Activated T-helper 2 cell treated with anti-CD3 and anti-CD28 coated beads, Interferon-gamma antibody, Interleukin-2, Interleukin-4, amounts not matched to agents 10 μg/mL and 5 μg/mL and 100 μg/mL, durations not matched to agents 14 hours and 24 hours and 36 hours (primary cell): ENCODE measurements at regions of chr12 and their contacts with region 1.

Region 1: DNA sequence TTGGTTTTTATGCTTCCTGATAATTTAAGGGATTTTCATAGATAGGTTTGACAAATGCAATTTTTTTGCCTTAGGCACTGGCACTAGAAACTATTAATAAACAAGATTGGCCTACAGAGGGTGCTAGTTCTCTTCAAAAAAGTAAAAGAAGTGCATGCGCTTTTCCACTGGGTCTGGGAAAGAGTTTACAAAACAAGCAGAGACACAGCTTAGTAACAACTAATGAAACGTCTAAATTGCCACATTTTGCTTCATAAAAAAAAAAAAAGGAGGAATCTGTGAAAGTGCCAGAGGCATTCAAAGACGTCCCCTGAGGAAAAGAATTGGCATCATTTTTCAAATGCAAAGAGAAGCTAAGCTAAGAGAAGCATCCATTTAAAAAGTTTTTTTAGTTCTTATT is 58.3 kb upstream of the EEA1 start:
- DNase-seq: no peak
- H3K4me3 Mint-ChIP-seq: no peak overlapping the region
- H3K27ac Mint-ChIP-seq: peak overlapping the region; percentile 60
- H3K4me1 Mint-ChIP-seq: peaks cover 38% of the 10 kb centered on the region
- H3K27me3 Mint-ChIP-seq: no peaks in the 10 kb centered on the region

Region 2: DNA sequence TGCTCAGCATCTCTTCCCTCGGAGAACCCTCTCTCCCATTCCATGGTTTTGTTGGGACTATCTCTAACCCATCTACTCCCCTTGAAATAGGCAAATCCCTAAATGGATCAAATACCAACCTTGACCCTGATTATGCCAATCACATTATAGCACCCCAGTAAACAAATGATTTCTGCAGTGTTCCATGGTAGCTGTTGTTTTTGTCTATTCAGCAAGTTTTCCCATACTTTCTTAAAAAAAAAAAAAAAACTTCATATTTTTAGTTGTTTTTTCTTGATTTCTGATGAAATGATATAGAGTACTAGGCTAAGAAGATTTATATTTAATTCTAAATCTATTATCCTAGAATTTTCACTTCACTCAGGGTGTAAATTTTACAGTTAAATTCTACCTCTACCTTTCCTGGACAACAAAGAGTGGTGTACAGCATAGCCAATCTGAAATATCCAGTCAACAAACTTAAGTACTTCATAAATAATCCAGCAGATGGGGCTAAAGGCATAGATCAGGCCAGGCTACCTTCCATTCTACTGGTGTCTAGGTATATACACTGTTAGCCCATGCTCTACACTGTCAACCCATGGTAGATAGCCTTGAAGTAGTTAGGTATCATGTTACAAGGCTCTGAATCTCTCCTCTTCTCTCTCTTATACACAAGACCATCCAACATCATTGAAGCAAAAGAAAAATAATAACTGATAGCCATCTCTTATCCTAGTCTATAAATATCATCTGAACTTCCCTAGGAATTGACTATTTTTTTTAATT is 202.4 kb before region 1 on chr12:
- intact Hi-C with region 1: loop called (anchors 1 kb)
- DNase-seq: no peak
- H3K4me3 Mint-ChIP-seq: no peak overlapping the region
- H3K27ac Mint-ChIP-seq: no peak overlapping the region
- H3K4me1 Mint-ChIP-seq: peaks cover 1% of the 10 kb centered on the region
- H3K27me3 Mint-ChIP-seq: no peaks in the 10 kb centered on the region

Region 3: GRCh38 chr12:92928962-92929915 is 58.1 kb before region 1 on chr12 and contains the start of gene EEA1:
- intact Hi-C with region 1: loop called (anchors 1 kb)
- DNase-seq: peak; percentile 93
- H3K4me3 Mint-ChIP-seq: peak within 1 kb of the TSS; percentile 88
- H3K27ac Mint-ChIP-seq: peak within 1 kb of the TSS; percentile 95
- H3K4me1 Mint-ChIP-seq: peaks cover 27% of the 10 kb centered on the region
- H3K27me3 Mint-ChIP-seq: peaks cover 2% of the 10 kb centered on the region
- total RNA-seq, gene EEA1: 30.5 and 31.9 TPM in 2 replicates

Region 4: DNA sequence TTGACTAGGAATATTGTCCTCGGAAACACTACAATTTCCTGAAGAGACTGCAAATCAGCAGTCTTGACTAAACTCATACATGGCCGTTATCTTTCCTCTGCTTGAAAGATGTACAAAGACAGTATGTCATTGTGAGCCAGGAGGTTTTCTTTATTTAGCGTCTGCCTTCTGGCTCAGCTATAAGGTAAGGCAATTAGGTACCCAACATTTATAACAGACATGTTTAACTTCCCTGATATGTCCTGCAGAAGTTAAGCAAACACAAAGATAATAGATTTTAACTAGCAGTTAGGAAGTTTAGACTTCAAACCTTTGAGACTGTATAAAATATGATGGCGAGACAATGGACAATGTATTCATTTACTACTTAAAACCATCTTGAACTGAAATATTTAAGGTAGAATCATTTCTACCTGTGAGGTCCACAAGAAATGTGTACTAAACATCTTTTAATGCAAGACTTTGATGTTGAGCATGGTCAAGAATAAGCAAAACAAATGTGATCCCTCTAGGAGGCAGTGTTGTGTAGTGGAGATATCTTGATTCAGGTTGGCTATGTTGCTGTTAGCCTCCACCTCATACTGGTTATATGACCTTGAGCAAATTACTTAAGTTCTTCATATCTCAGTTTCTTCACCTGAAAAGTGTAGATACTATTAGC is 37.9 kb after region 1 on chr12:
- intact Hi-C with region 1: loop called (anchors 5 kb)
- DNase-seq: no peak
- H3K4me3 Mint-ChIP-seq: no peak overlapping the region
- H3K27ac Mint-ChIP-seq: no peak overlapping the region
- H3K4me1 Mint-ChIP-seq: peaks cover 2% of the 10 kb centered on the region
- H3K27me3 Mint-ChIP-seq: no peaks in the 10 kb centered on the region

Region 5: DNA sequence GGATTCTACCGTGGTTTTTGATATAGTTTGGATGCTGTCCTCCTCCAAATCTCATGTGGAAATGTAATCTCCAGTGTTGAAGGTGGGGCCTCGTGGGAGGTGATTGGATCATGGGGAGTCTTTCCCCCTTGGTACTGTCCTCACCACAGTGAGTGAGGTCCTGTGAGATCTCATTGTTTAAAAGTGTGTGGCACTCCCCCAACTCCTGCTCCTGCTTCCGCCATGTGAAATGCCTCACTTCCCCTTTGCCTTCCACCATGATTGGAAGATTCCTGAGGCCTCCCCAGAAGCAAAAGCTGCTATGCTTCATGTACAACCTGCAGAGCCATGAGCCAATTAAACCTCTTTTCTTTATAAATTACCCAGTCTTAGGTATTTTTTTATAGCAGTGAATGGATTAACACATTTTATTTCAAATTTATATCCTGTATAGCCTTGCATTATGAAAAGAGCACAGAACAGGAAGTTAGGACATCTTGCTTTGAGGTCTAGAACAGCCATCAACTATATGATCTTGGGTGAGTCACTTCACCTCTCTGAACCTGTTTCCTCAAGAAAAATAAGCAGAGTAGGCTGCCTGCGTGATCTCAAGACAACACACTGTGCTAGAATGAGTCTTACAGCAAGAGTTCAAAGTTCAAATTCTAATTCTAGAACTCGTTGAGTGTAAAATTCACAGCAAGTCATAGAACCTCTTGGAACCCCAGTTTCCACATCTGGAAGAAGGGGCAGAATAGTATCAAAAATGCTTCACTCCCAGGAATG is 102.6 kb after region 1 on chr12:
- intact Hi-C with region 1: loop called (anchors 1 kb)
- DNase-seq: no peak
- H3K4me3 Mint-ChIP-seq: no peak overlapping the region
- H3K27ac Mint-ChIP-seq: peak overlapping the region; percentile 67
- H3K4me1 Mint-ChIP-seq: peaks cover 15% of the 10 kb centered on the region
- H3K27me3 Mint-ChIP-seq: no peaks in the 10 kb centered on the region

Region 6: GRCh38 chr12:93387780-93388179 is 400.4 kb after region 1 on chr12:
- intact Hi-C with region 1: loop called (anchors 1 kb)
- DNase-seq: no peak
- H3K4me3 Mint-ChIP-seq: no peak overlapping the region
- H3K27ac Mint-ChIP-seq: peak overlapping the region; percentile 72
- H3K4me1 Mint-ChIP-seq: peaks cover 41% of the 10 kb centered on the region
- H3K27me3 Mint-ChIP-seq: no peaks in the 10 kb centered on the region

Region 7: GRCh38 chr12:93419388-93420034 is 432.1 kb after region 1 on chr12:
- intact Hi-C with region 1: loop called (anchors 1 kb)
- DNase-seq: no peak
- H3K4me3 Mint-ChIP-seq: no peak overlapping the region
- H3K27ac Mint-ChIP-seq: no peak overlapping the region
- H3K4me1 Mint-ChIP-seq: peaks cover 69% of the 10 kb centered on the region
- H3K27me3 Mint-ChIP-seq: no peaks in the 10 kb centered on the region